Transverse colon (tissue), 4 donors: ENCODE measurements at regions of chr6 and their contacts with region 1.

Region 1: DNA sequence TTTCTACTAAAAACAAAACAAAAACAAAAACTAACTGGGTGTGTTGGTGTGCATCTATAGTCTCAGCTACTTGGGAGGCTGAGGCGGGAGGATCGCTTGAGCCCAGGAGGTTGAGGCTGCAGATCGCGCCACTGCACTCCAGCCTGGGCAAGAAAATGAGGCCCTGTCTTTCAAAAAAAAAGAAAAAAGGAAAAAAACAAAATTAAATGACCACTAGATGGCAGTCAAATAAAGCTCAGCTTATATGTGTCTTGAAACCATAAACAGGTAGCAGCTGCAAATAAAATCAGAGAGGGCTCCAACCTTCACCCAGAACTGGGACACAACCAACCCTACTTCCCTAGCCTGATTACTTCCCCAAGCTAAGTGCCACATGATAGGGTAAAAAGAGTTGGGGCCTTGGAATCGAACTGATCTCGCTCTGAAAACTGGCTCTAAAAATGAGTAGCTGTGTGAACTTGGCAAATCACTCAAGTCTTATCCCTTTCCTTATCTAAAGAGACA is 67.1 kb upstream of the ADGRF4 start:
- DNase-seq: no peak
- H3K4me3 ChIP-seq: no peak overlapping the region
- H3K27ac ChIP-seq: peak overlapping the region; percentile 51 to 74 (median 66)
- H3K4me1 ChIP-seq: peaks cover 3 to 38% (median 17%) of the 10 kb centered on the region in 4 donors
- H3K27me3 ChIP-seq: no peaks in the 10 kb centered on the region
- CTCF ChIP-seq: peak; percentile 63 to 80 (median 68)
- EP300 ChIP-seq: no peak
- POLR2A ChIP-seq: no peak

Region 2: DNA sequence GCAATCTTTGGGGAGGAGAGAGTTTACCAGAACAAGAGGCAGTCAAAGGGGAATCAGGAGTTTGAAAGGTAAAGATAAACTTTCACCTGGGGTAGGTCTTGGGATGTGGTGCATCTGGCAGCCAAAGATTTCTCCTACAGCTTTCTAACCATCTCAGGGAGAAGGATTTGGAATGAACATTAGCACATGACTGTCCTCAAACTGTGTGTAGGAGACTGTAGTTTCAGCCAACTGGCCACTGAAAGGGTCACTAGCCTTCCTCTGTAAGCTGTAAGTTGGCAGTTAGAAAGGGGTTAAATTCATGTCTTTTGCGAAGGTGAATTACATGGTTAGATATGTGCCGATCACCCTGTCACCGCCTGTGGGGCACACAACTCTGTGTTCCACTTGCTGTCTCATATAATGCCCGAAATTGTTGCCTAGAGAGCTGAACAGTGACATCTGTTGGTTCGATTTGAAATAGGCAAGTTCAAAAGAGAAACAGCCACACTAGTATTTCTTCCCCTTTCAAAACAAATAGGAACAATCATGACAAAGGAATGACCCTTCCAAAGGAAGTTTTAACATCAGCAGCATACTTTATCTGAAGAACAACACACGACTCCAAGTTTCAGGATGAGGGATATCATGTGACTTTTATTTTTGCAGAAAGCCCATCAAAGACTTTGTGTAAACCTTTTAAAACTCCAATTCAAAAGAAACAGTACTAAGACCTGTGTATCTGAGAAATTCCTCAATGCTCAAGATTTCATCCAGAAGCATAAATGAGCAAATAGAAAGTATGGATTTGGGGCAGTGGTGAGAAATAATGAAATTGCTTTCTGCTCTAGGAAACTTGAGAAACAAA is 149.4 kb after region 1 on chr6:
- in situ Hi-C with region 1: loop called in 2 of 4 experiments (anchors 5 kb)
- intact Hi-C with region 1: no loop called
- DNase-seq: peak; percentile 22
- H3K4me3 ChIP-seq: no peak overlapping the region
- H3K27ac ChIP-seq: no peak overlapping the region
- H3K4me1 ChIP-seq: peaks cover 0 to 7% (median 1%) of the 10 kb centered on the region in 4 donors
- H3K27me3 ChIP-seq: peaks cover 2% of the 10 kb centered on the region
- CTCF ChIP-seq: peak; percentile 58 to 71 (median 63)
- EP300 ChIP-seq: no peak
- POLR2A ChIP-seq: no peak

Region 3: GRCh38 chr6:48068278-48069251 is 437.2 kb after region 1 on chr6:
- in situ Hi-C with region 1: no loop called
- intact Hi-C with region 1: no loop called
- DNase-seq: no peak
- H3K4me3 ChIP-seq: peak overlapping the region in 1 of 4 donors; percentile 19
- H3K27ac ChIP-seq: no peak overlapping the region
- H3K4me1 ChIP-seq: peaks cover 0 to 7% (median 3%) of the 10 kb centered on the region in 4 donors
- H3K27me3 ChIP-seq: peaks cover 40% of the 10 kb centered on the region
- CTCF ChIP-seq: no peak
- EP300 ChIP-seq: no peak
- POLR2A ChIP-seq: no peak